ENCODE measurements at regions of chr20 and their contacts with region 1.

Region 1: GRCh38 chr20:5788385-5788895 is 38.2 kb downstream of the SHLD1 start:
- DNase-seq: peak; percentile 94
- ATAC-seq: peak; percentile 99
- H3K4me3 ChIP-seq: no peak overlapping the region
- H3K27ac ChIP-seq: no peak overlapping the region
- H3K4me1 ChIP-seq: peaks cover 33% of the 10 kb centered on the region
- H3K27me3 ChIP-seq: no peaks in the 10 kb centered on the region
- CTCF ChIP-seq: peak; percentile 95
- EP300 ChIP-seq: no peak
- POLR2A ChIP-seq: no peak
- RAD21 ChIP-seq: peak; percentile 98

Region 2: DNA sequence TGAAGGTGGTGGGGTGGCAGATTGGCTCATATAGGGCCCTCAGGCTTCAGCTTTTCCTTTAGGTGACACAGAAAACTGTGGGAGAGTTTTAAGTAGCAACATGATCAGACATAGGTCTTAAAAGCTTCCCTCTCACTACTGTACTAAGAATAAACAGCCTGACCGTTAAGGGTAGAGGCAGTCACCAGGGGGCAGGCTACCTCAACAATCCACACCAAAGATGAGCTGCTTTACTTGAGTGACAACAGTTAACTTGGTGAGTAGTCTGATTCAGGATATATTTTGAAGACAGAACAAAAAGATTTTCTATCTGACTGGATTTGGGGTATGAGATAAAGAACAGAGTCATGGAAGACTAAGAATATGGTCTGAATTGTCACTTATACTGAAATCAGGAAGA is 231.3 kb before region 1 on chr20:
- CTCF ChIA-PET with region 1: interaction called, 58 read pairs
- POLR2A ChIA-PET with region 1: no interaction called
- in situ Hi-C with region 1: no loop called
- intact Hi-C with region 1: loop called (anchors 1 kb)
- DNase-seq: peak; percentile 61
- ATAC-seq: peak; percentile 98
- H3K4me3 ChIP-seq: no peak overlapping the region
- H3K27ac ChIP-seq: no peak overlapping the region
- H3K4me1 ChIP-seq: no peaks in the 10 kb centered on the region
- H3K27me3 ChIP-seq: no peaks in the 10 kb centered on the region
- CTCF ChIP-seq: peak; percentile 87
- EP300 ChIP-seq: no peak
- POLR2A ChIP-seq: no peak
- RAD21 ChIP-seq: peak; percentile 88

Region 3: GRCh38 chr20:5569021-5569420 is 219.4 kb before region 1 on chr20:
- CTCF ChIA-PET with region 1: interaction called, 54 read pairs
- POLR2A ChIA-PET with region 1: interaction called, 3 read pairs
- in situ Hi-C with region 1: loop called (anchors 5 kb)
- intact Hi-C with region 1: loop called (anchors 1 kb)
- DNase-seq: peak; percentile 71
- ATAC-seq: peak; percentile 94
- H3K4me3 ChIP-seq: no peak overlapping the region
- H3K27ac ChIP-seq: no peak overlapping the region
- H3K4me1 ChIP-seq: no peaks in the 10 kb centered on the region
- H3K27me3 ChIP-seq: no peaks in the 10 kb centered on the region
- CTCF ChIP-seq: peak; percentile 73
- EP300 ChIP-seq: no peak
- POLR2A ChIP-seq: no peak
- RAD21 ChIP-seq: peak; percentile 69

Region 4: GRCh38 chr20:5749952-5750779 is 38.3 kb before region 1 on chr20 and contains the start of gene SHLD1:
- CTCF ChIA-PET with region 1: no interaction called
- POLR2A ChIA-PET with region 1: interaction called, 5 read pairs
- in situ Hi-C with region 1: no loop called
- intact Hi-C with region 1: loop called (anchors 5 kb)
- DNase-seq: peak; percentile 92
- ATAC-seq: peak; percentile 97
- H3K4me3 ChIP-seq: peak within 1 kb of the TSS; percentile 61 to 85 (median 77)
- H3K27ac ChIP-seq: peak within 1 kb of the TSS; percentile 76
- H3K4me1 ChIP-seq: peaks cover 47% of the 10 kb centered on the region
- H3K27me3 ChIP-seq: no peaks in the 10 kb centered on the region
- CTCF ChIP-seq: no peak
- EP300 ChIP-seq: no peak
- POLR2A ChIP-seq: peak; percentile 62 to 83
- RAD21 ChIP-seq: peak; percentile 56
- total RNA-seq, gene SHLD1: 8.9 and 11.3 TPM in 2 replicates